Tibial artery (tissue), 4 donors: ENCODE measurements at regions of chr2 and their contacts with region 1.

Region 1: GRCh38 chr2:52000151-52000855 is 968.4 kb upstream of the NRXN1 start:
- DNase-seq: no peak
- H3K4me3 ChIP-seq: no peak overlapping the region
- H3K27ac ChIP-seq: no peak overlapping the region
- H3K4me1 ChIP-seq: no peaks in the 10 kb centered on the region
- H3K27me3 ChIP-seq: no peaks in the 10 kb centered on the region
- CTCF ChIP-seq: no peak

Region 2: GRCh38 chr2:52034706-52035105 is 34.4 kb after region 1 on chr2:
- intact Hi-C with region 1: loop called (anchors 2 kb)
- DNase-seq: no peak
- H3K4me3 ChIP-seq: no peak overlapping the region
- H3K27ac ChIP-seq: no peak overlapping the region
- H3K4me1 ChIP-seq: no peaks in the 10 kb centered on the region
- H3K27me3 ChIP-seq: no peaks in the 10 kb centered on the region
- CTCF ChIP-seq: no peak